H1 (cell line): ENCODE measurements at regions of chr11 and their contacts with region 1.

Region 1: GRCh38 chr11:132312701-132313111 is 942.3 kb downstream of the NTM start:
- DNase-seq: peak in 1 of 2 experiments; percentile 23
- H3K4me3 ChIP-seq: no peak overlapping the region
- H3K27ac ChIP-seq: no peak overlapping the region
- H3K4me1 ChIP-seq: no peaks in the 10 kb centered on the region; a peak in 1 of 7 replicates
- H3K27me3 ChIP-seq: no peaks in the 10 kb centered on the region
- CTCF ChIP-seq: peak; percentile 72 to 92 (median 82)
- EP300 ChIP-seq: no peak
- POLR2A ChIP-seq: no peak
- RAD21 ChIP-seq: peak; percentile 64 to 76

Region 2: GRCh38 chr11:132286106-132286505 is 26.6 kb before region 1 on chr11:
- CTCF ChIA-PET with region 1: interaction called, 10 read pairs
- POLR2A ChIA-PET with region 1: no interaction called
- DNase-seq: no peak
- H3K4me3 ChIP-seq: no peak overlapping the region
- H3K27ac ChIP-seq: no peak overlapping the region
- H3K4me1 ChIP-seq: peaks cover 2 to 12% (median 10%) of the 10 kb centered on the region in 4 experiments; a peak in 5 of 7 replicates
- H3K27me3 ChIP-seq: no peaks in the 10 kb centered on the region; a peak in 1 of 7 replicates
- CTCF ChIP-seq: no peak
- EP300 ChIP-seq: no peak
- POLR2A ChIP-seq: no peak
- RAD21 ChIP-seq: no peak

Region 3: GRCh38 chr11:132330515-132330914 is 17.8 kb after region 1 on chr11:
- CTCF ChIA-PET with region 1: interaction called, 36 read pairs
- POLR2A ChIA-PET with region 1: no interaction called
- DNase-seq: no peak
- H3K4me3 ChIP-seq: no peak overlapping the region
- H3K27ac ChIP-seq: no peak overlapping the region
- H3K4me1 ChIP-seq: peaks cover 0 to 7% (median 3%) of the 10 kb centered on the region in 4 experiments; a peak in 3 of 7 replicates
- H3K27me3 ChIP-seq: peaks cover 0 to 6% (median under 1%) of the 10 kb centered on the region in 4 experiments; a peak in 4 of 7 replicates
- CTCF ChIP-seq: no peak
- EP300 ChIP-seq: no peak
- POLR2A ChIP-seq: no peak
- RAD21 ChIP-seq: no peak

Region 4: DNA sequence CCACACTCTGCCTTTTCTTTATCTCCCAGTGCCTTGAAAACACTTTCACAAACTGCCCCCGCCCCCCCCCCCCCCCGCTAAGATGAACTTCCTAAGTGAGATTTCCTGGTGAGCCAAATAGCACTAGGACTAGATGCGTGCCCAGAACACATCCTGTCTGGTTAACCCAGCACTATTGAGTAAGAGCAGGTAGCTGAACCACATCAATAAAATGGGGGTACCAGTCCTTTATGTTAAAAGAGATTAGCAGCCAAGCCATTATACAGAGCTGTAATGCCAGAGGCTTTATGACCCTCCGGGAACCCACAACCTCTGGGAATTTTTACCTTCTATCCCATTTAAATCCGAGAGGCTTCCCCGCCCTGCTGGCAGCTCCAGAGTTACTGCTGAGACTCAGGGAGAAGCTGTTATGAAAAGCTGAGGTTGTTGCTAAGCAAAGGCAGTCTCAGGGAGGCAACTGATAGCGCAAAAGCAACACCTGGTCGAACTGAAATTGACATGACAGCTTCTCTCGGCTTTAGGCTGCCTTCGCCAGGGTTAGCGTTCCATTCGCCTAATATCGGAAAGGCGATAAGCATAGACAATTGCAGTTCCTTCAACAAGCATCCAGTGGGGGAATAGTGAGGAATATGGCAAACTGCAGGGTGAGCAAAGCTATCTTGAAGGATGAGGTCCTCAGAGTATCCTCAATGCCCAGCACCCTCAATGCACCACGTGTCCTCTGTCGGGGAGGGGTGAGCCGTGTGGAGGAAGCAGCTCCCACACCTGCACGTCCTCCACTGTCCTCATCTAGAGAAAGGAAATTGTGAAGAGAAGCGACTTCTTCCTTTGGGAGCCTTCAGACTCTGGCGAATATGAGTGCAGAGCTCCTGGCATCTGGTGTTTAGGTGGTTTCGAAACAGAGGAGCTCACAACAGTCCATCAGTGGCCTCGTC is 34.7 kb after region 1 on chr11:
- CTCF ChIA-PET with region 1: interaction called, 22 read pairs
- POLR2A ChIA-PET with region 1: no interaction called
- DNase-seq: no peak
- H3K4me3 ChIP-seq: no peak overlapping the region
- H3K27ac ChIP-seq: no peak overlapping the region; the same call in 1 of the 2 replicates
- H3K4me1 ChIP-seq: peaks cover 2 to 4% (median 3%) of the 10 kb centered on the region in 4 experiments; a peak in 5 of 7 replicates
- H3K27me3 ChIP-seq: no peaks in the 10 kb centered on the region
- CTCF ChIP-seq: 0 out of 4 replicates have a peak, but pooled peaks of 1 of the 3 experiments have one; percentile 3
- EP300 ChIP-seq: no peak
- POLR2A ChIP-seq: no peak
- RAD21 ChIP-seq: no peak